Activated CD8-positive, alpha-beta T cell treated with anti-CD3 and anti-CD28 coated beads, Interleukin-2, amount 10 ng/mL, durations not matched to agents 7 days and 5 days (primary cell): ENCODE measurements at regions of chr11 and their contacts with region 1.

Region 1: GRCh38 chr11:77994412-77995362 is at the start of gene INTS4:
- DNase-seq: peak; percentile 99
- ATAC-seq: peak; percentile 99
- H3K4me3 Mint-ChIP-seq: peak within 1 kb of the TSS; percentile 94
- H3K27ac Mint-ChIP-seq: peak within 1 kb of the TSS; percentile 89
- H3K4me1 Mint-ChIP-seq: peaks cover 24% of the 10 kb centered on the region
- H3K27me3 Mint-ChIP-seq: no peaks in the 10 kb centered on the region
- total RNA-seq, gene INTS4: 45.1 to 51.2 TPM

Region 2: DNA sequence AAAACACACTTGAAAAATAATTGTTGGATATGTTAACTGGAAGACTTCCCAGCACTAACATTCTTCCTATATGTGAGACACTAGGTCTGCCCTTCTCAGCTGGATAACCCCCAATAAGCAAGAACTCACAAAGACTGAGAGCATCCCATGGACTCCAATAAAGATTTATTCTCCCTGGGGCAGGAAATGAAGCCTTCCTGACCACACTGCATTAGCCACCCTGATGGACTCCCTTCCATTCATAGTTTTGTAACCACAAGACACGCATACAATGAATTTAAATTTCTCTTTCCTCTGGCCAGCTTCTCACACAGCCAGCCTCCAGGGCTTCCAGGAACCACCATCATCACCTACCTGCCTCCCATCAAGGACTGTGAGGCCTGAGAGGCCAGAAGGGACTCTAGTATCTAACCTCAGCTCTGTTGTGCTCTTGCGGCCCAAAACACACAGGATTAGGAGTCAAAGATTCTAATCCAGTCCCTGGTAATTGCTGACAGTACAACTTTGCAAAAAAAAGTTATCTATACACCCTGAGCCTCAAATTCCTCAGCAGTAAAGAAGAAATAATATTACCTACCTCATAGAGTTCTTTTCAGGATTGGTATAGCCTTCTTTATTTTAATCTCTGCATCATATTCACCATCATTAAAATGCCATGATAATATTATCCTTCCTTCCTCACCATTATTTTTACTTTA is 647.6 kb before region 1 on chr11:
- CTCF ChIA-PET with region 1: no interaction called
- POLR2A ChIA-PET with region 1: no interaction called
- DNase-seq: no peak
- ATAC-seq: no peak
- H3K4me3 Mint-ChIP-seq: no peak overlapping the region
- H3K27ac Mint-ChIP-seq: no peak overlapping the region
- H3K4me1 Mint-ChIP-seq: no peaks in the 10 kb centered on the region
- H3K27me3 Mint-ChIP-seq: no peaks in the 10 kb centered on the region

Region 3: GRCh38 chr11:77820563-77821348 is 173.9 kb before region 1 on chr11 and contains the starts of genes AAMDC and RSF1:
- CTCF ChIA-PET with region 1: interaction called, 25 read pairs
- POLR2A ChIA-PET with region 1: interaction called, 17 read pairs
- DNase-seq: peak; percentile 98
- ATAC-seq: peak; percentile 90
- H3K4me3 Mint-ChIP-seq: peak within 1 kb of the TSS; percentile 97
- H3K27ac Mint-ChIP-seq: peak within 1 kb of the TSS; percentile 93
- H3K4me1 Mint-ChIP-seq: peaks cover 35% of the 10 kb centered on the region
- H3K27me3 Mint-ChIP-seq: no peaks in the 10 kb centered on the region
- total RNA-seq, gene AAMDC: 12.7 to 13.0 TPM
- total RNA-seq, gene RSF1: 41.1 to 49.1 TPM

Region 4: DNA sequence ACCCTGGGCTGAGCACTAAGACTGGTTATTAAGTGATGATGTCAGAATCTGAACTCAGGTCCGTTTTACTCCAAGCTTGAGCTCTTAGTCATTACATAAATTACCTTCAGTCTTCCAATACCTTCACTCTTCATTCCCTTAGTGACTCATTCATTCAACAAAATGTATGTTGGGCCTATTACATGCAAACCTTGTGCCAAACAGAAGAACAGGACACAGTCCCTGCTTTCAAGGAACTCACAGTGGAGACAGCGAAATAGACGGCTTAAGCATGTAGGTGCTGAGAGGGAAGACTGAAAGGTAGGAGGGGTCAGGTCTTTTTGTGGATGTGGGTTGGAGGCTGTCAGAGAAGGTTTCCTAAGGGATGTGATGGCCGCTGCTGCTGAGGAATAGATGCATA is 25.1 kb after region 1 on chr11:
- CTCF ChIA-PET with region 1: no interaction called
- POLR2A ChIA-PET with region 1: no interaction called
- DNase-seq: no peak
- ATAC-seq: no peak
- H3K4me3 Mint-ChIP-seq: no peak overlapping the region
- H3K27ac Mint-ChIP-seq: no peak overlapping the region
- H3K4me1 Mint-ChIP-seq: peaks cover 3% of the 10 kb centered on the region
- H3K27me3 Mint-ChIP-seq: peaks cover 22% of the 10 kb centered on the region

Region 5: DNA sequence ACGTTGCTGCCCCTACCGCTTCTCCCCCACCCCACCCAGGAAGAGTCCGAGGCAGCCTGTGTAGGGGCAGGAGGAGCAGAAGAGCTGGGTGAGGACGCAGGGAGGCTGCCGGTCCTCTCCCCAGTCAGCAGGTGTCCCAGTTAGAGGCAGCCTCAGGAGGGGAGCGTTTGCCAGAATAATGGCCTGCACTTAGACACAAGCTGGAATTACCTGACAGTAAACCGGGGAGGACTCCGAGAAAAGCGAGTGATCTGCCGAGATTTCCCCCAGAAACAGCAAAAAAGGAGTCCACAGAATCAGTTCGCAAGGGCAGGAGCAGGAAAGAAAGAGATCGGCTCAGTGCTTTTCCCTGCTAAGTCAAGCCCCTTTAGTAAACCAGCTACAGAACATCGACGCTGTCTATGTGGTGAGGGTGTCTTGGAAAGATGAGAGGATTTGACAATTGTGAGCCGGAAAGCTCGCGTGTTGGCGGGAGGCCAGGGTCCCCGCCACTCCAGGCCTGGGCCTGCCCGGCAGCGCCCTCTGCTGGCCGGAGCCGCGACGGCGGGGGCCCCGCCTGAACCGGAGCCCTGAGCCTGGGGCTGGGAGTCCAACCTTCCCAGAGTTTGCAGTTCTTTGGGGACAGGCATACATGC is 51.3 kb after region 1 on chr11:
- CTCF ChIA-PET with region 1: interaction called, 21 read pairs
- POLR2A ChIA-PET with region 1: interaction called, 3 read pairs
- DNase-seq: peak; percentile 77
- ATAC-seq: peak; percentile 99
- H3K4me3 Mint-ChIP-seq: peak overlapping the region; percentile 49
- H3K27ac Mint-ChIP-seq: peak overlapping the region; percentile 39
- H3K4me1 Mint-ChIP-seq: peaks cover 17% of the 10 kb centered on the region
- H3K27me3 Mint-ChIP-seq: no peaks in the 10 kb centered on the region

Region 6: GRCh38 chr11:78139422-78140391 is 145.0 kb after region 1 on chr11 and contains the start of gene ALG8:
- CTCF ChIA-PET with region 1: interaction called, 4 read pairs
- POLR2A ChIA-PET with region 1: interaction called, 10 read pairs
- DNase-seq: peak; percentile 97
- ATAC-seq: peak; percentile 97
- H3K4me3 Mint-ChIP-seq: peak within 1 kb of the TSS; percentile 80
- H3K27ac Mint-ChIP-seq: peak within 1 kb of the TSS; percentile 93
- H3K4me1 Mint-ChIP-seq: peaks cover 44% of the 10 kb centered on the region
- H3K27me3 Mint-ChIP-seq: no peaks in the 10 kb centered on the region
- total RNA-seq, gene ALG8: 49.9 to 51.7 TPM